Posterior cingulate gyrus (tissue), 11 donors: ENCODE measurements at regions of chr14 and their contacts with region 1.

Region 1: GRCh38 chr14:22472935-22473854 is 115.8 kb downstream of the DAD1 start:
- DNase-seq: peak in 4 of 10 donors; percentile 21 to 60 (median 40)

Region 2: GRCh38 chr14:22303589-22304195 is 169.5 kb before region 1 on chr14:
- intact Hi-C with region 1: no loop called
- DNase-seq: no peak

Region 3: GRCh38 chr14:22314181-22314820 is 158.9 kb before region 1 on chr14:
- intact Hi-C with region 1: loop called (anchors 5 kb)
- DNase-seq: peak in 1 of 10 donors; percentile 26

Region 4: GRCh38 chr14:22386924-22387775 is 86.0 kb before region 1 on chr14:
- intact Hi-C with region 1: loop called (anchors 1 kb)
- DNase-seq: peak in 8 of 10 donors; percentile 46 to 90 (median 72)

Region 5: DNA sequence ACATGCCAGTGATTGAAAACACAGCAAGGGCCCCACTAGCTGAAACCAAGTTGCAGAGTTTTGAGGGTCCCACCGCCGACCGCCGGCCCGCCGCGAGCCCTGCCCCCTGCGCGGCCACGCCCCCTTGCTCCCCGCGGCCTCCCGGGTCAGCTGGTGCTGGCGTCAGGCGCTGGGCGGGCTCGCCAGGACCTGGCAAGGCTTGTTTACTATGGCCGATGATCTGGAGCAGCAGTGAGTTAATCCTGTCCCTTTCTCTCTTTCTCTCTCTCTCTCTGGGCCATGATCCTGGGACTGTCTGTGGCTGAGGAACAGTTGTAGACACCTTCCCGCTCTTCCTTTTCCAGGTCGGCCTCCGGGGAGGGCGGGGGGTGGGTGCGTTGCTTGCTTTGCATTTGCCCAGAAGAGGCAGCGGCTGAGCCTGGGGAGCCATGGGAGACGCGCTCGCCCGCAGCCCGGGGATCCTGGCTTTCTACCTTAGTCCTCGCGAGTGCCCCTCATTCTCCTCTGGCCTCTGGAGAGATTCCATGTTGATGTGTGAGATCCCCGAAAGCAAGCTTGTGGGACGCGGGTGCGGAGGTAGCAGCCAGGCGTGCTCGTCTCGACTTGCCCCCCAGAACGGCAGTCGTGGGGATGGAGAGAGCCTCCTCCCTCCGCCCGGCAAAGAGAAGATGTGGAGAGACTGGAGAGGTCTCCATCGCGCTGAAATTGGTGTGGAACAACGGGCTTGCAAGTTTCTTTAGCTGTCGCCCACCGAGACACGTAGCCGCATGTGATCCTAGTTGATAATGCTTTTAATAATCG is 125.1 kb after region 1 on chr14 and contains the start of gene ABHD4:
- intact Hi-C with region 1: no loop called
- DNase-seq: peak; percentile 63 to 97 (median 82)

Region 6: DNA sequence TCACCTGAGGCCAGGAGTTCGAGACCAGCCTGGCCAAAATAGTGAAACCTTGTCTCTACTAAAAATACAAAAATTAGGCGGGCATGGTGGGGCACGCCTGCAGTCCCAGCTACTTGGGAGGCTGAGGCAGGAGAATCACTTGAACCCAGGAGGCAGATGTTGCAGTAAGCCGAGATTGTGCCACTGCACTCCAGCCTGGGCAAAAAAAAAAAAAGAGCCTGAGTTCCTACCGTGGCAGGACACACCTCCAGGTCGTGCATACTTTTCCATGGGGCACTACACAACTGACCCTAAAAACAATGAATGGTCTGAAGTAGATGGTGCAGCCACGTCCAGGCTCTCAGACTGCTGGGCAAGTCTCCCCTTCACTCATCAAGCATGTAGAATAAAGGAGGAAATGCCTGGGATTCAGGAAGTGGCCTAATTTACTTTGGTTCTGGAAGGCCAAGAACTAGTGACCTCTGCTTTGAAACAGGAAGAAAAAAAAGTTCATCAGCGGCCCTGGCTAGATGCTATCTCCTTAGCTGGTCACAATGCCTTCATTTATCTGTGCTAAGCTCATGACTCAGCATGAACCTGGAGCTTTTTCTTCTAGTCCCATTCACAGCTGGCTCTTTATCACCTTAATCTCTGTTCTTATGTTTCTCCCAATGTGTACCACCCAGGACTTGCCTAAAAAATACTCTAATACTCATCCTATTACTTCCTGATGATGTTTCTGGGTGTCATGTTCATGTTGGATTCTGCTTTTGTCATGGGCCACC is 226.8 kb after region 1 on chr14:
- intact Hi-C with region 1: no loop called
- DNase-seq: no peak